Dorsolateral prefrontal cortex (tissue), 120 donors: ENCODE measurements at regions of chr2 and their contacts with region 1.

Region 1: DNA sequence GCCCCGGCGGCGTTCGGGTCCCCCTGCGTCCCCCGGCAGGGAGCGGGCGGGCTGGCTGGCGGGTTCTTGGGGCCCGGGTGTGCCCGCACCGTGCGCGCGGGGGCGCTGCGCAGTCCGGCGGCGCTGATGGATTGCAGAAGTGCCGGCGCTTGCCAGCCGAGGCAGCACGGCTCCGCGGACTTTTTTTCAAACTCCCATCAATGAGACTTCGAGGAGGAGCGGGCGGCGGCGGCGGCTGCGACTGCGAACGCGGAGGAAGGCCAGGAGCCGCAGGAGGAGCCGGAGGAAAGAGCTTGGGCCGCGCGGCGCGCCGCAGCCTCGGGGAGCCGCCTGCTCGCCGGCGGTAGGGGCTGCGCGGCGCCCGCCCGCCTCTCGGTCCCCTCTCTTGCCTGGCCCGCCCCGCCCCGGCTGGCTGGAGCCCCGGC is at the start of gene GLI2:
- DNase-seq: peak in 9 of 10 donors; percentile 23 to 80 (median 66)
- H3K4me3 ChIP-seq: peak within 1 kb of the TSS; percentile 22 to 73 (median 59)
- H3K27ac ChIP-seq: peak within 1 kb of the TSS in 6 of 59 donors; percentile 47 to 65 (median 56)
- H3K27me3 ChIP-seq: peaks cover 0 to 76% (median 48%) of the 10 kb centered on the region in 45 donors
- CTCF ChIP-seq: peak; percentile 26 to 86 (median 67)
- total RNA-seq, gene GLI2: 0.79 to 13.1 (median 3.3) TPM

Region 2: GRCh38 chr2:120613742-120614571 is 121.8 kb before region 1 on chr2:
- intact Hi-C with region 1: no loop called
- DNase-seq: peak in 2 of 10 donors; percentile 15 to 60
- H3K4me3 ChIP-seq: no peak overlapping the region
- H3K27ac ChIP-seq: no peak overlapping the region
- H3K27me3 ChIP-seq: peaks cover 0 to 8% (median 0%) of the 10 kb centered on the region in 45 donors
- CTCF ChIP-seq: no peak

Region 3: DNA sequence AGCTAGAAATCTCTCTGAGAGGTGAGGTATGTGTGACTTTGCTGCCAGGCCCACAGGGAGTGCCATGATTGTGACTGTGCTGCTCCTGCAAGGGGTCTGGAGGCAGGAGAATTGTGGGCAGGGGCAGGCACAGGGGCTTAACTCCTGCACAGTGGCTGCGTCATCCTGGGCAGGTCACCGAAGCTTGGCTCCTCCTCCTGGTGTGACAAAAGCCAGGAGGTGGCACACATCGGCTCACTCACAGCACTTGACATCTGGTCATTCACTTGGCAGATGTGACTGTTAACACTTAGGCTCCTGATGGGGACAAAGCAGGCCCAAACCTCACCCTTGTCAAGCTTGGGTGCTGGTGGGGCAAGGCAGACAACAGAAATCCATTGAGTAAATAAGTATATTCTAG is 36.5 kb before region 1 on chr2:
- intact Hi-C with region 1: loop called in 1 of 2 experiments (anchors 5 kb)
- DNase-seq: no peak
- H3K4me3 ChIP-seq: no peak overlapping the region
- H3K27ac ChIP-seq: no peak overlapping the region
- H3K27me3 ChIP-seq: peaks cover 0 to 24% (median 6%) of the 10 kb centered on the region in 45 donors
- CTCF ChIP-seq: no peak

Region 4: DNA sequence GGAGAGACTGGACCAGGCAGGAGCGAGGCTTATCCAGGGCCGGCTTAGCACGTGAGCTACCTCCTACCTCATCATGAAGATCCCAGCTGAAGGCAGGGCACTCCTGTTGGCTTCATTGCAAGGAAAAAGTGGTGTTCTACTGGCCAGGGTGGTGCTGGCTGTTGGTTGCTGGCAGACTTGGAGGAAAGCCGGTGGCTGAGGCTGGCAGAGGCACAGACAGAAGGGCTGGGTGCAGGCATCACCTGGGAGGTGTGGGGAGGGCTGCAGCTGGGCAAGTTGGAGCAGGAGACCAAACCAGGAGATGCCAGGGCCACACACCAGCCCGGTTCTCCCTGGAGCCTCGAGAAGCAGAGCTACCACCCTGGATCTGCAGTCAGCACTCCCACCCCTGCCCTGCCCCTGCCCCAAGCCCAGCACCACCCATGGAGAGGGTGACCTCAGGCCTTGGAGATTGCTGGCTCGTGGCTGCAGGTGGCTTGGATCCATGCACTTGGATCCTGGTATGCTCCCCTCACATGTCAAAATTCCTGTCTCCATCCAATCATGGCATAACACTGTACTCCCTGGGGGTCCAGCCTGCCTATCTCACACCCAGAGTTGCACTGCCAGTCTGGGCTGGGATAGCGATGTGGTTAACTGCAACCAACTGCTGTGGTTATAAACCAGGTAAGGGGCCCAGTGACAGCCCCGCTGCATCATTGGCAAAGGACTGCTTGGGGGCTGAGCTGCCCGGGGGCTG is 49.6 kb after region 1 on chr2:
- intact Hi-C with region 1: loop called in 1 of 2 experiments (anchors 1 kb)
- DNase-seq: no peak
- H3K4me3 ChIP-seq: no peak overlapping the region
- H3K27ac ChIP-seq: no peak overlapping the region
- H3K27me3 ChIP-seq: peaks cover 0 to 4% (median 0%) of the 10 kb centered on the region in 45 donors
- CTCF ChIP-seq: no peak

Region 5: DNA sequence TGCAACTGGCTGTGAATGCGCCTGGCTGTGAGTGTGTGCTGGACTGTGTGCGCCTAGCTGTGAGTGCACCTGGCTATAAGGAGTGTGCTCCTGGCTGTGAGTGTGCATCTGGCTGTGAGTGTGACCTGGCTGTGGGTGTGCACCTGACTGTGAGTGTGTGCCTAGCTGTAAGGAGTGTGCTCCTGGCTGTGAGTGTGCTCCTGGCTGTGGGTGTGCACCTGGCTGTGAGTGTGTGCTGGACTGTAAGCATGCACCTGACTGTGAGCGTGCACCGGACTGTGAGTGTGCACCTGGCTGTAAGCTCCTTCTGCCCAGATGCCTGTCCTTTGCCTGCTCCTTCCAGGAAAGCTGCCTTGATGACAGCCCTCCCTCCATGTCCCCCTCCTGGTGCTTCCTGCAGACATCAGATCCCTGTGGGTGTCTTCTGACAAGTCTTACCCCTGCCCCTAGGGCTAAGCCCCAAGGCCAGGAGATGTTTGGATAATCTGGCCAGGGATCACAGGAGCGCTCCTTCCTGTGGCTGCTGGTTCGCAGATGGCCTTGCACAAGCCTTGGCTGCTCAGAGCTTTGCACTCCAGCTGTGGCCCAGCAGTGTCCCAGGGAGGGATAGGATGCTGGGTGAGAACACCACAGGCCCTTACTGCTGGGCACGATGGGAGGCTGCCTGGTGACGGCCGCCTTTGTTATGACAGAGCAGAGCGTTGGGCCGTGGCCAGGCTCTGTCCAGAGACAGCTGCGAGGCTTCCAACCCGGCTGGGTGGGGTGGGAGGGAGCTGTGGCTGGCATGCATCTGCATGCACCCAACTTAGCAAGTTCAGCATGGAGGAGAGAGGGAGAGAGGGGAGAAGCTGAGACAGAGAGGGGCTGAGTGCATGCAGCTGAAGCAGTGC is 89.9 kb after region 1 on chr2:
- intact Hi-C with region 1: loop called in 1 of 2 experiments (anchors 10 kb)
- DNase-seq: peak in 9 of 10 donors; percentile 77 to 95 (median 85)
- H3K4me3 ChIP-seq: no peak overlapping the region
- H3K27ac ChIP-seq: peak overlapping the region in 10 of 59 donors; percentile 10 to 73 (median 40)
- H3K27me3 ChIP-seq: peaks cover 0 to 14% (median 0%) of the 10 kb centered on the region in 45 donors
- CTCF ChIP-seq: peak in 9 of 56 donors; percentile 12 to 34 (median 25)

Region 6: DNA sequence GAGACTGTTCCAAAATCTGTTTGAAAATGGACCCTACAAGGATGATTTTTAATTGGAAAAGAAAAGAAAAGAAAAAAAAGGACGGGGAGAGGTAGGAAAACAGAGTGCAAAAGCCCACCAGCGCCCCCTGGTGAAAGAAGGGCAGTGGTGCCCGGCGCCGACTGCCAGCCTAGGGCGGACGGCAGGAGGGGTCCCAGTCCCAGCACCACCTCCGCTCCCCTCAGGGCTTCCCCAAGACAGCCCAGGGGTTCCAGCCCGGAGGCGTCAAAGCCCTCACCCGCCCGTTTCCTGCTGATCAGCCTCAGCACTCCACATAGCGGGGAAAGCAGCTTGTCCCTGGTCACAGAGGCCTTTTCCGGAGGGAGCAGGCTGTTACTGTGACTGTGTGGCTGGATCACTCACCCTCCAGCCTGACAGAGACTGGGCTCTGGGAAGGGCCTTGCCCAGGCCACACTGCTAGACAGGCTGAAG is 335.3 kb after region 1 on chr2:
- intact Hi-C with region 1: loop called in 1 of 2 experiments (anchors 2 kb)
- DNase-seq: peak in 9 of 10 donors; percentile 50 to 80 (median 67)
- H3K4me3 ChIP-seq: no peak overlapping the region
- H3K27ac ChIP-seq: no peak overlapping the region
- H3K27me3 ChIP-seq: peaks cover 0 to 6% (median 0%) of the 10 kb centered on the region in 45 donors
- CTCF ChIP-seq: peak; percentile 76 to 98 (median 94)